ENCODE measurements at regions of chr14 and their contacts with region 1.

Region 1: GRCh38 chr14:68795597-68796417 is 2.9 kb upstream of the ZFP36L1 start:
- DNase-seq: peak; percentile 95
- H3K4me3 Mint-ChIP-seq: peak overlapping the region; percentile 93
- H3K27ac Mint-ChIP-seq: peak overlapping the region; percentile 100
- H3K4me1 Mint-ChIP-seq: peaks cover 39% of the 10 kb centered on the region
- H3K27me3 Mint-ChIP-seq: no peaks in the 10 kb centered on the region

Region 2: GRCh38 chr14:68232300-68233055 is 563.3 kb before region 1 on chr14:
- intact Hi-C with region 1: loop called (anchors 2 kb)
- DNase-seq: peak; percentile 71
- H3K4me3 Mint-ChIP-seq: no peak overlapping the region
- H3K27ac Mint-ChIP-seq: no peak overlapping the region
- H3K4me1 Mint-ChIP-seq: peaks cover 9% of the 10 kb centered on the region
- H3K27me3 Mint-ChIP-seq: no peaks in the 10 kb centered on the region

Region 3: GRCh38 chr14:68482772-68483395 is 312.9 kb before region 1 on chr14:
- intact Hi-C with region 1: loop called (anchors 5 kb)
- DNase-seq: no peak
- H3K4me3 Mint-ChIP-seq: peak overlapping the region; percentile 5
- H3K27ac Mint-ChIP-seq: no peak overlapping the region
- H3K4me1 Mint-ChIP-seq: peaks cover 34% of the 10 kb centered on the region
- H3K27me3 Mint-ChIP-seq: no peaks in the 10 kb centered on the region

Region 4: DNA sequence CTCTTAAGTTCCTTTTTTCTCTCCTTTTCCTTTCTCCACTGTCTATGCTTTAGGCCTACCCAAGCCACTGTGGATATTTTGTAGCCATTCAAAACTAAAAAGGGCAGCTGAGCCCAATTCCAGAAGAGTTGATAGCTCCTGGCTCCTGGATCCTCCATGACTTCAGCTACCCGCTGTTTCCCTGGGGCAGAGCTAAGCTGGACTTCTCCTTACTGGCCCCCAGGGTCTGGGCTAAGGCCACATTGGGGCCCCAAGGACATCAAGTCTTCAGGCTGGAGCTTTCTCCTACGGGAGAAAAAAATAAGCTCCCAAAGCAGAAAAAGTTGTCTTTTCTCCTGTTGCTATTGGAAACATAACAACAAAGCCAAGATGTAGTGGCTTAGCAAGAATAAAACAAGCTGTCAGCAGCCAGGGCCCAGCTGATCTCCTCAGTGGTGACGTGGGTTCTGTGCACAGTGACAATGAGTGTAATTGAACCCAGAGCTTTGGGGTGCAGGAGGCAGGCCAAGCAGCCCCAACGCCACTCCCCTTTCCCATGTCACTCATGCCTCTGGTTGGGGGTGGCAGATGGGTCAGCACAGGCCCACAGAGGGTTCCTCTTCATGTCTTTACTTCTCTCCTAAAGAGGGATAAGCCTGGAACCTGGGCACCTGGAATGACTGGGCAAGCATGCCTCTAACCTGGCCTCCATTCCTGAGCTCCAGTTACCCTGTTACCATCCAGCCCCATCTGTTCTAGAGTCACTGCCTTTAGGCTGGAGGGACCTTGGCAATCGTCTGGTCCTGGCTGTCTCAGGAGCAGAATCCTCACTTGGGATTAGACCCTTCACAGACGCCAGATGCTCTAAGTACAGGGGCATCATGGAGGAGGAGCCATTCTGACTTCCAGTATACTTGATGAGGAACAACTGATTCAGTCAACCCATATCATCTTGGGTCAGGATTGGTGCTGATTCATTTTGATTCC is 174.1 kb before region 1 on chr14:
- intact Hi-C with region 1: no loop called
- DNase-seq: no peak
- H3K4me3 Mint-ChIP-seq: no peak overlapping the region
- H3K27ac Mint-ChIP-seq: no peak overlapping the region
- H3K4me1 Mint-ChIP-seq: peaks cover 2% of the 10 kb centered on the region
- H3K27me3 Mint-ChIP-seq: peaks cover 4% of the 10 kb centered on the region

Region 5: DNA sequence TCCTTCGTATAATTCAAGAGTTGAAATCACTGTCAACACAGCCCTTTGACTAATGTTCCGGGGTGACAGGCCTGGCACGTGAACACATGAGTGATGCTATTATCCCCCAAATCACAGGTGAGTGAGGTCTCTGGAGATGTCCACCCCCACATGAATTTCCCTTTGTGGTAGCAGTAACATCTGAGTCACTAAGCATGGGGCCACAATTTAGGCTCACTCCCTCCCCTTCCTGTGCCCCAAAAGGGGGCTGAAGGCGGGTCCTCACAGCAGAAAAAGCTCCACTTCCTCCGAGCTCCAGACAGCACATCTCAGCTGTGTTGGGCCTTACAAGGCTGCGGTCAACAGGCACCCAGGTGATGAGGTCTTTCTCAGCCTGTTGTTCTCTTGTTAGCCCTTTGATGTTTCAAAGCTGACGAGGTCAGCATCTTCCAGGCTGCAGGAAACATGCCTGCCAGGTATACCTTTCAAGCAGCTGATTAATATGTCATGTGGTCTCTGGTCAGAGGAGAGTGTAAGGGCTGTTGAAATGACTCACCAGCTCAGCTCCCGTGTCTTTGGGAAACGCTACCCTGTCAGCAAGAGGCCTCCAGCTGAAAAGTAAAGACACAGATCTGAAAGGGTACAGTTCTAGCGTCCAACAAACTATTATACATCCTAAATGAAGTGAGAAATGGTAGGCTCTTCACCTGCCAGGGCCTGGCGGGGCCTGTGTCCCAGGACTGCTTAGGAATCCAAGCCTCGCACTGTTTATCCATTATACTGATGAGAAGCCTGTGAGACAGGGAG is 110.2 kb before region 1 on chr14:
- intact Hi-C with region 1: loop called (anchors 1 kb)
- DNase-seq: peak; percentile 92
- H3K4me3 Mint-ChIP-seq: peak overlapping the region; percentile 61
- H3K27ac Mint-ChIP-seq: peak overlapping the region; percentile 91
- H3K4me1 Mint-ChIP-seq: peaks cover 56% of the 10 kb centered on the region
- H3K27me3 Mint-ChIP-seq: no peaks in the 10 kb centered on the region

Region 6: GRCh38 chr14:68780358-68781160 is 15.2 kb before region 1 on chr14:
- intact Hi-C with region 1: loop called (anchors 2 kb)
- DNase-seq: peak; percentile 84
- H3K4me3 Mint-ChIP-seq: peak overlapping the region; percentile 76
- H3K27ac Mint-ChIP-seq: peak overlapping the region; percentile 95
- H3K4me1 Mint-ChIP-seq: peaks cover 64% of the 10 kb centered on the region
- H3K27me3 Mint-ChIP-seq: no peaks in the 10 kb centered on the region

Region 7: DNA sequence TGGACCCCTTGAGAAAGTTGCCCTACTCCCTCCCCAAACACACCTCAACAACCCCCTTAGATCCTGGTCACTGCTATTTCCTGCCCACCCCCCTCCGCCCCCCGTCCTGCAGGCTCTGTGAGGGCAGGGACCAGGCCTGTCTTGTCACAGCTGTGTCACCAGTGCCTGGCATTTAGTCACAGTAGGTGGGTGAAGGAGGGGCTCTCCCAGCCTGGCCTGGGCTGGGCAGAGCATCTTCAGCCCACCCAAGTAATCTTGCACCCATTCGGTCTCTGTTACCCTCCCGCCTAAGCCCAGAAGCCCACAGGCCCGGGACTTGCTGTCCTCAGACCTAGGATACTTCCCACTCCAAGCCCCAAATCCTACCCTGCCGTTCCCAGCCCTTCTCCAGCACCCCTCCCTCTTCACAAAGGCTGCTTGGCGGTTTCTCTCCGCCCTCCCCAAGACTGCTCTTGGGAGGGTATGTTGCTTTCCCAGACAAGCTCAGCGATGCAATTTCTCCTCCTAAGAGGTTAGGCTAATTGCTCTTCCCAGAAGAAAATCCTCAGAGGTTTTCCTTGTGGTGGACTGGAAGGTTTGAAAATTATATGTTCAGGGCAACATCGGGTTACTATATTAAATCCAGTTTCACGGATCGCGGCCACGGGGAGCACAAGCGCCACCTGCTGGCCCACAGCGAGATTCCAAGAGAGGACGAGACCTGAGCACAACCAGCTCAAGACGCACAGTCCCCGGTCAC is 47.8 kb after region 1 on chr14:
- intact Hi-C with region 1: loop called (anchors 2 kb)
- DNase-seq: peak; percentile 92
- H3K4me3 Mint-ChIP-seq: peak overlapping the region; percentile 40
- H3K27ac Mint-ChIP-seq: peak overlapping the region; percentile 56
- H3K4me1 Mint-ChIP-seq: peaks cover 28% of the 10 kb centered on the region
- H3K27me3 Mint-ChIP-seq: peaks cover 8% of the 10 kb centered on the region

Region 8: DNA sequence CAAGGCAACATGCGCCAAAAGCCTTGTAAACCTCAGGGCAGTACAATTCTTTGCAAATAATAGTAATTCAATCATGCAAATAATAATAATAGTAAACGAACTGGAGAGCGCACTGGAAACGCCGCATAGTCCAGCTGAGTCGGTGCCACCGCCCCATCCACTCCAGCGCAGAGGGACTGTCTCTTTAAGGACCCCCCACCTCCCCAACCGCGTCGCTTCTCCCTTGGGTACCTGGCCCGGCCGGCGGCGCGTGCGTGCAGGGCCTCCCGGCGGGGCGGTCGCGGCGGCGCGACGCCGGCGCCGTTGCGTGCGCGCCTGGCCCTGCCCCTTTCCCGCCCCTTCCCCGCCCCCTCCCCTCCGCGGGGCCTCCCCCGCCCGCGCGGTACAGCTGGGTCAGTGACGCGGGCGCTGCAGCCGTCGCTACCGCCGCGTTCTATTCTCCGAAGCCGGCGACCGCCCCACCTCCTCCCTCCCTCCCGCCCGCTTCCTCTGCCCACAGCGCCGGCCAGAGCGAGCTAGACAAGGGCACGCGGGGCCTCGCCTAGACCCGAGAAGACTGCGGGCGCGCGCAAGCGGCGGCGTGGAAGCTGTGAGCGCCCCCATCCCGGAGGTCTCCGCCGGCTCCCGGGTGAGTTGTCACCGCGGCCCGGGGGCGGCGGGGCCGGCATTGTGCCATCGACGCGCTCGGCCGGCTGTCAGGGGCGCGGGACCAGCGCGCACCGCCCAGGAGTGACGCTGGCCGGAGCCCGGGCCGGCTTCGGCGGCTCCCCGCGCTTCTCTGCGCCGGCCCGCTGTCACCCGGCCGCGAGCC is 815.6 kb after region 1 on chr14 and contains the start of gene SUSD6:
- intact Hi-C with region 1: loop called (anchors 10 kb)
- DNase-seq: peak; percentile 96
- H3K4me3 Mint-ChIP-seq: peak within 1 kb of the TSS; percentile 95
- H3K27ac Mint-ChIP-seq: peak within 1 kb of the TSS; percentile 97
- H3K4me1 Mint-ChIP-seq: peaks cover 65% of the 10 kb centered on the region
- H3K27me3 Mint-ChIP-seq: no peaks in the 10 kb centered on the region
- total RNA-seq, gene SUSD6: 73.4 and 78.9 TPM in 2 replicates

Measured in activated CD4-positive, alpha-beta T cell treated with anti-CD3 and anti-CD28 coated beads, Interleukin-2, amount 10 ng/mL, durations not matched to agents 24 days and 14 days (primary cell).